HCT116 (cell line): ENCODE measurements at regions of chr9 and their contacts with region 1.

Region 1: GRCh38 chr9:87270221-87270847 is 227.3 kb upstream of the DAPK1 start:
- DNase-seq: no peak
- ATAC-seq: no peak
- H3K4me3 ChIP-seq: no peak overlapping the region
- H3K27ac ChIP-seq: no peak overlapping the region
- H3K4me1 ChIP-seq: no peaks in the 10 kb centered on the region
- H3K27me3 ChIP-seq: peaks cover 51% of the 10 kb centered on the region
- CTCF ChIP-seq: no peak
- POLR2A ChIP-seq: no peak
- RAD21 ChIP-seq: no peak

Region 2: DNA sequence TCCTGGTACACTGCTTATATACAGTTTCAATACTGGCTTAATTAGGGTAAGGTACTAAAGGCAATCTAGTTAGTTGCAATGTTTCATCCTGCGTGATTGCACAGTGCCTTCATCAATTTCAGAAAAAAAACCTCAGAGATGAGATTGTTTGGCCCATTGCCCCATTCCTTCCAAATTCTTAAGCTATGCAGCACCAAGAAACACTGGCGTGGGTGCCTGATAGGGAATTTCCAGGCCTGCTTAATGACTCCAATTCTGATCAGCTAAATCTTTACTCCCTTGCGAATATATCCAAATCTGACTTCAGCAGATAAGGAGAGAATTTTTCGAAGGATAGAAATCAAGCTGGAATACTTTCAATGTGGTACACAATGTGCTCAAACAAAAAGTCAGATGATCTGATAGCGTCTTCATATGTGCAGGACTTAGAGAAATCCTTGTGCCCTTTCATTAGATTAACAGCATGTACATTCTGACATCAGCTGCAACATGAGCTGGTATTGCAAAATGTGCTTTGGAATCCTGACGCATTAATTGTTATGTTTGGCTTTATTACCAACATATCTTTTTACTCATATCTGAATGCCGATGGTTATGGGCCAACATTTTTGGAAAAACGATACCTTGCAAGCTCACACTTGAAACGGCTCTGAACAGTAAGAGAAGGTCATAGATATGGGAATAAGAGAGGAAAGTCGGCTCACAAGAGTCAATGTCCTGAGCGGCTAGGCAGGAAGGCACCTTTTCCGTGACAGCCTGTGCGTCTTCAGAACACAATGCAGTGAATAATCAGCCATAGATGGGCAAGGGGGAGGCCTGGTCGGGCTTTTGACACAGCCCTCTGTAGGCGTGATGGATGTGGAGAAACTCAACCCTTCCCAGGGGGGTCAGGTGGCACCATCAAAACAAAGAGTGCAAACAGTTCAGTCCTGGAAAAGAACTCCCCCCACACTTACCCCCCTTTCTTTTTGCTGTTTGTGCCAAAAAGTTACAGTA is 286.8 kb before region 1 on chr9:
- CTCF ChIA-PET with region 1: no interaction called
- POLR2A ChIA-PET with region 1: no interaction called
- RAD21 ChIA-PET with region 1: no interaction called
- intact Hi-C with region 1: no loop called
- DNase-seq: no peak
- ATAC-seq: no peak
- H3K4me3 ChIP-seq: no peak overlapping the region
- H3K27ac ChIP-seq: no peak overlapping the region
- H3K4me1 ChIP-seq: no peaks in the 10 kb centered on the region
- H3K27me3 ChIP-seq: peaks cover 65% of the 10 kb centered on the region
- CTCF ChIP-seq: no peak
- POLR2A ChIP-seq: no peak
- RAD21 ChIP-seq: no peak

Region 3: GRCh38 chr9:87310827-87311523 is 40.6 kb after region 1 on chr9:
- CTCF ChIA-PET with region 1: no interaction called
- POLR2A ChIA-PET with region 1: no interaction called
- RAD21 ChIA-PET with region 1: no interaction called
- intact Hi-C with region 1: loop called (anchors 5 kb)
- DNase-seq: no peak
- ATAC-seq: no peak
- H3K4me3 ChIP-seq: no peak overlapping the region
- H3K27ac ChIP-seq: no peak overlapping the region
- H3K4me1 ChIP-seq: no peaks in the 10 kb centered on the region
- H3K27me3 ChIP-seq: peaks cover 14% of the 10 kb centered on the region
- CTCF ChIP-seq: no peak
- POLR2A ChIP-seq: no peak
- RAD21 ChIP-seq: no peak